HepG2 (cell line): ENCODE measurements at regions of chr12 and their contacts with region 1.

Region 1: DNA sequence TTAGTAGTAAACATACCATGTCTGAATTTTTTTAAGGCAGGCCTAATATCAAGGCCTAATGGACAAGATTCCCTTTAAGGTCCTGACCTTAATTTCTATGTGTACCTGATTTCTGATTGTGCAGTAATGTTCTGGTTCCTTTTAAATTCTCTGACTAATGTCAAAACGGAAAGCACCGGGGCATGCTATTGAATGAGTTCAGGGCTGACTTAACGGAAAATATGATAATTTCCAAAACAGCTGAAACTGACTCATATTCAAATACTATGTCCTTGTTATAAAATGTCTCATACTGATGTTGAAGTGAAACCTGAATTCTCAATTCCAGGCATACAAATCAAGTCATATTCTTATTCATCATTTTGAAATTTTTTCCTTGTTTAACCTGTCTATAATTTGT is 6.7 kb downstream of the TAS2R43 start:
- DNase-seq: no peak
- ATAC-seq: no peak
- H3K4me3 ChIP-seq: no peak overlapping the region
- H3K27ac ChIP-seq: no peak overlapping the region
- H3K4me1 ChIP-seq: no peaks in the 10 kb centered on the region
- H3K27me3 ChIP-seq: no peaks in the 10 kb centered on the region
- CTCF ChIP-seq: no peak
- EP300 ChIP-seq: no peak
- POLR2A ChIP-seq: no peak
- RAD21 ChIP-seq: no peak

Region 2: GRCh38 chr12:10851243-10851858 is 234.1 kb before region 1 on chr12:
- CTCF ChIA-PET with region 1: no interaction called
- POLR2A ChIA-PET with region 1: no interaction called
- in situ Hi-C with region 1: no loop called
- intact Hi-C with region 1: no loop called
- DNase-seq: no peak
- ATAC-seq: no peak
- H3K4me3 ChIP-seq: no peak overlapping the region
- H3K27ac ChIP-seq: no peak overlapping the region
- H3K4me1 ChIP-seq: no peaks in the 10 kb centered on the region
- H3K27me3 ChIP-seq: no peaks in the 10 kb centered on the region
- CTCF ChIP-seq: no peak
- EP300 ChIP-seq: no peak
- POLR2A ChIP-seq: no peak
- RAD21 ChIP-seq: no peak

Region 3: DNA sequence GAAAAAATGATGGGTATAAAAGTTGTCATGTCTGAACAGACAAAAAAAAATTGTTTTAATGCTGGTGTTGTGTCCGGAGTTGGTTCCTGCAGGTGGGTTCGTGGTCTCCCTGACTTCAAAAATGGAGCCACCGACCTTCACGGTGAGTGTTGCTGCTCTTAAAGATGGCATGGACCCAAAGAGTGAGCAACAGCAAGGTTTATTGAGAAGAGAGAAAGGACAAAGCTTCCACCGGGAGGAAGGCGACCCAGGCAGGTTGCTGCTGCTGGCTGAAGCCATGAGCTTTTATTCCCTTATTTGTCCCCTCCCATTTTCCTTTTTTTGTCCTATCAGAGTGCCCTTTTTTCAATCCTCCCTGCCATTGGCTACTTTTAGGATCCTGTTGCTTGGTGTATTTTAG is 54.1 kb before region 1 on chr12 and contains the start of gene TAS2R31:
- CTCF ChIA-PET with region 1: no interaction called
- POLR2A ChIA-PET with region 1: no interaction called
- in situ Hi-C with region 1: loop called (anchors 10 kb)
- intact Hi-C with region 1: loop called (anchors 2 kb)
- DNase-seq: no peak
- ATAC-seq: no peak
- H3K4me3 ChIP-seq: no peak within 1 kb of the TSS
- H3K27ac ChIP-seq: no peak within 1 kb of the TSS
- H3K4me1 ChIP-seq: no peaks in the 10 kb centered on the region
- H3K27me3 ChIP-seq: no peaks in the 10 kb centered on the region
- CTCF ChIP-seq: no peak
- EP300 ChIP-seq: no peak
- POLR2A ChIP-seq: no peak
- RAD21 ChIP-seq: no peak
- total RNA-seq, gene TAS2R31: 1.0 and 6.5 TPM in 2 replicates

Region 4: GRCh38 chr12:11130382-11130781 is 45.0 kb after region 1 on chr12:
- CTCF ChIA-PET with region 1: no interaction called
- POLR2A ChIA-PET with region 1: no interaction called
- in situ Hi-C with region 1: no loop called
- intact Hi-C with region 1: loop called (anchors 1 kb)
- DNase-seq: no peak
- ATAC-seq: no peak
- H3K4me3 ChIP-seq: no peak overlapping the region
- H3K27ac ChIP-seq: no peak overlapping the region
- H3K4me1 ChIP-seq: 0 out of 2 replicates have a peak, but pooled peaks cover 9% of the 10 kb centered on the region
- H3K27me3 ChIP-seq: no peaks in the 10 kb centered on the region
- CTCF ChIP-seq: no peak
- EP300 ChIP-seq: no peak
- POLR2A ChIP-seq: no peak
- RAD21 ChIP-seq: no peak